Caco-2 (cell line): ENCODE measurements at regions of chr12 and their contacts with region 1.

Region 1: DNA sequence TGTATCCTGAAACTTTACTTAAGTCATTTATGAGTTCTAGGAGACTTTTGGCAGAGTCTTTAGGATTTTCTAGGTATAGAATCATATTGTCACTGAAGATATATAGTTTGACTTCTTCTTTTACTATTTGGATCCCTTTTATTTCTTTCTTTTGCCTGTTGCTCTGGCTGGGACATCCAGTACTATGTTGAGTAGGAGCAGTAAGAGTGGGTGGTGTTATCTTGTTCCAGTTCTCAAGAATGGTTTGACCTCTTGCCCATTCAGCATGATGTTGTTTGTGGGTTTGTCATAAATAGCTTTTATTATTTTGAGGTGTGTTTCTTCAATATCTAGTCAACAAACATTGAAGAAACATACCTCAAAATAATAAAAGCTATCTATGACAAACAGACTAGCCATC is 35.0 kb downstream of the LIN7A start:
- DNase-seq: no peak
- H3K4me3 ChIP-seq: no peak overlapping the region
- H3K4me3 Mint-ChIP-seq: no peak overlapping the region
- H3K27ac Mint-ChIP-seq: no peak overlapping the region
- H3K4me1 ChIP-seq: no peaks in the 10 kb centered on the region
- H3K4me1 Mint-ChIP-seq: no peaks in the 10 kb centered on the region
- H3K27me3 ChIP-seq: no peaks in the 10 kb centered on the region
- H3K27me3 Mint-ChIP-seq: no peaks in the 10 kb centered on the region
- CTCF ChIP-seq: no peak

Region 2: GRCh38 chr12:80791863-80792262 is 110.8 kb before region 1 on chr12:
- CTCF ChIA-PET with region 1: no interaction called
- POLR2A ChIA-PET with region 1: no interaction called
- intact Hi-C with region 1: no loop called
- DNase-seq: no peak
- H3K4me3 ChIP-seq: no peak overlapping the region
- H3K4me3 Mint-ChIP-seq: no peak overlapping the region
- H3K27ac Mint-ChIP-seq: no peak overlapping the region
- H3K4me1 ChIP-seq: no peaks in the 10 kb centered on the region
- H3K4me1 Mint-ChIP-seq: no peaks in the 10 kb centered on the region
- H3K27me3 ChIP-seq: no peaks in the 10 kb centered on the region
- H3K27me3 Mint-ChIP-seq: peaks cover 2% of the 10 kb centered on the region
- CTCF ChIP-seq: no peak

Region 3: DNA sequence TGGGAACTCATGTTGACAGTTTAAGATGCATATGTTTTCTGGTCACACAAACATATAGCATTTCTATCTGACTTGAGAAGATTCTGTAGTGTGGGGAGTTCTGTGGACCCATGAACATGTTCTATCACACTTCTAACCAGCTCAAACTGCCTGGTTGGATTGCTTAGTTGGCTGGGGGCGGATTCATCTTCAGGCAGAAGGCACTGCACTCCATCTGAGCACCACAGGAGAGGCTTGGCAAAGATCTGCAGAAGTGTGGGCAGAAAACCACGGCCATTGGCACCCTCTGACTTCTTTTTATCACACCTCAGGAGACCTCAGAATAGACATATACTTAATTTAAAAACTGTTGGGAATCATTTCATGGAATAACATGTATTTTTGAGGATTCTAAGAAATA is 33.4 kb before region 1 on chr12:
- CTCF ChIA-PET with region 1: no interaction called
- POLR2A ChIA-PET with region 1: no interaction called
- intact Hi-C with region 1: loop called (anchors 1 kb)
- DNase-seq: no peak
- H3K4me3 ChIP-seq: no peak overlapping the region
- H3K4me3 Mint-ChIP-seq: no peak overlapping the region
- H3K27ac Mint-ChIP-seq: no peak overlapping the region
- H3K4me1 ChIP-seq: no peaks in the 10 kb centered on the region
- H3K4me1 Mint-ChIP-seq: no peaks in the 10 kb centered on the region
- H3K27me3 ChIP-seq: no peaks in the 10 kb centered on the region
- H3K27me3 Mint-ChIP-seq: no peaks in the 10 kb centered on the region
- CTCF ChIP-seq: no peak